ENCODE measurements at regions of chr1 and their contacts with region 1.

Region 1: DNA sequence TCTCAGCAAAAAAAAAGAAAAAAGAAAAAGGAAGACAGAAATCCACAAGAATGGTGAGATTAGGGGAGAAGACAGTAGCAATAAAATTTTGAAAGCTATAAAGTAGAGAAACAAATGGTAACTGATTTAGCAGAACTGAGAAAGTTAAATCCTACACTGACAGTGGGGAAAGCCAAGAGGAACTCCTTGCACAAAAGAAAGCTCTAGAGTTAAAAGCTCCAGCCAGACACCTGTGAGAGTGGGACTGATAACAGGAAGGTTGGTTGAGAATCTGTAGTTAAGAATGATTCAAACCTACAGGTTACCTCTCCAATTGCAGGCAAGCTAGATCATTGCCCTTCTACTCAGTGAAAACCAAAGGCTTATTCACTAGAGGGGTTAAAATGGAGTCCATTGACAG is 23.6 kb downstream of the FBXO28 start:
- DNase-seq: no peak
- ATAC-seq: no peak
- H3K4me3 ChIP-seq: no peak overlapping the region
- H3K27ac ChIP-seq: no peak overlapping the region
- H3K4me1 ChIP-seq: no peaks in the 10 kb centered on the region
- H3K27me3 ChIP-seq: no peaks in the 10 kb centered on the region
- CTCF ChIP-seq: no peak
- POLR2A ChIP-seq: no peak
- RAD21 ChIP-seq: no peak

Region 2: DNA sequence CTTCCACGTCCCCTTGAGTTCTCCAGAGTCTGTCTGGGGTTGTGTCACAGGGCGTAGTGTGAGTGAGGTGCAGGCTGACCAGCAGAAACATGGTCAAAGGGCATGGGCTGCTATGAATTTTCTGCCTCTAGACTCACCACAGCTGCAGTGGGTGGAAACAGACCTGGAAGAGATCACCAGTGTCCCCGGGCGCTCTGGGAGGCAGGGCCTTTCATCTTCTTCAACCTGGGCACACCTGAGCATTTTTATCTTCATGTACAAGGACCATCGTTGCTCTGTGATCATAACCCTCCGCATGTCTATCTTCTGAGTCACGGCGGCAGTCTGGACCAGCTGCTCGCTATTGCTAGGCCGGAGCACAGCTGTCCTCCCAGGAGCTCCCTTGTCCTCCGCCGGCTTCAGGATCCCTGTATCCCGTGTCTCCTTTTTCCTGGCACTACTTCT is 75.1 kb after region 1 on chr1:
- CTCF ChIA-PET with region 1: no interaction called
- POLR2A ChIA-PET with region 1: interaction called, 11 read pairs
- dilution Hi-C with region 1: no loop called
- in situ Hi-C with region 1: no loop called
- intact Hi-C with region 1: no loop called
- DNase-seq: no peak
- ATAC-seq: no peak; the same call in 1 of the 2 replicates
- H3K4me3 ChIP-seq: no peak overlapping the region
- H3K27ac ChIP-seq: no peak overlapping the region
- H3K4me1 ChIP-seq: peaks cover 3% of the 10 kb centered on the region
- H3K27me3 ChIP-seq: no peaks in the 10 kb centered on the region
- CTCF ChIP-seq: no peak
- POLR2A ChIP-seq: no peak
- RAD21 ChIP-seq: no peak

Measured in IMR-90 (cell line).